ENCODE measurements at regions of chr15 and their contacts with region 1.

Region 1: GRCh38 chr15:76235186-76235826 is 76.0 kb downstream of the ETFA start:
- DNase-seq: peak; percentile 17
- ATAC-seq: peak; percentile 96
- H3K4me3 ChIP-seq: no peak overlapping the region
- H3K27ac ChIP-seq: no peak overlapping the region
- H3K4me1 ChIP-seq: no peaks in the 10 kb centered on the region
- H3K27me3 ChIP-seq: no peaks in the 10 kb centered on the region
- CTCF ChIP-seq: peak; percentile 75

Region 2: GRCh38 chr15:76335307-76336253 is 100.3 kb after region 1 on chr15:
- CTCF ChIA-PET with region 1: interaction called, 19 read pairs
- POLR2A ChIA-PET with region 1: no interaction called
- in situ Hi-C with region 1: no loop called
- intact Hi-C with region 1: loop called (anchors 5 kb)
- DNase-seq: no peak
- ATAC-seq: no peak
- H3K4me3 ChIP-seq: peak overlapping the region in 1 of 2 experiments; percentile 20; a peak in 1 of 4 replicates
- H3K27ac ChIP-seq: no peak overlapping the region
- H3K4me1 ChIP-seq: peaks cover 3% of the 10 kb centered on the region; the same call in 1 of the 2 replicates
- H3K27me3 ChIP-seq: no peaks in the 10 kb centered on the region; the same call in 1 of the 2 replicates
- CTCF ChIP-seq: no peak

Region 3: DNA sequence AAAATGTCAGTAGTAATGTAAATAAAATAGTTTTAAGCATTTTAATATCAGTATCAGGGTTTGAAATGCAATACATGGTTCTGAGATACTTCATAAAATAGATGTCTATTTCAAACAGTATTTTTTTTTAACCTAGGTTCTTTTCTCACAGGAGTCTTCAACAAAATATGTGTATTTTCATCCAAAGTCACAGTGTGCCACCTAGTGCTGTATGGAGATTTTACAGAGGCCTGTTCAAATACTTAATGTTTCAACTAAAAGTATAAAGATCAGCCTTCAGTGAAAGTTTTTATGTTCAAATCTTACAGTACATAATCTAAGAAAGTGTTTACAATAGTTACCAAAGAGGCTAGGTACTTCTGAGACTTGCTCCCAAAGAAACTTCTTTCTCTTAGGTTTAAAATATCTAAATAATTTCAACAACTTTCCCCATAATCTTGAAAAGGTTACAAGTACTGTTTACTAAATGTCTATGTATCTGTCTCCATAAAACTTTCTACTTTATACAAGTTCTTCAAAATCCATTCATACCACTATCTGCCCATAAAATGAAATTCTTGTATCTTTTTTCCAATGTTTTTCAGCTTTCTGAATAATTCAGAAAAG is 631.5 kb after region 1 on chr15:
- CTCF ChIA-PET with region 1: no interaction called
- POLR2A ChIA-PET with region 1: no interaction called
- in situ Hi-C with region 1: no loop called
- intact Hi-C with region 1: loop called (anchors 10 kb)
- DNase-seq: peak; percentile 5
- ATAC-seq: no peak
- H3K4me3 ChIP-seq: no peak overlapping the region
- H3K27ac ChIP-seq: no peak overlapping the region
- H3K4me1 ChIP-seq: no peaks in the 10 kb centered on the region
- H3K27me3 ChIP-seq: no peaks in the 10 kb centered on the region
- CTCF ChIP-seq: peak; percentile 51; the same call in 1 of the 2 replicates